GM12878 (cell line): ENCODE measurements at regions of chr2 and their contacts with region 1.

Region 1: DNA sequence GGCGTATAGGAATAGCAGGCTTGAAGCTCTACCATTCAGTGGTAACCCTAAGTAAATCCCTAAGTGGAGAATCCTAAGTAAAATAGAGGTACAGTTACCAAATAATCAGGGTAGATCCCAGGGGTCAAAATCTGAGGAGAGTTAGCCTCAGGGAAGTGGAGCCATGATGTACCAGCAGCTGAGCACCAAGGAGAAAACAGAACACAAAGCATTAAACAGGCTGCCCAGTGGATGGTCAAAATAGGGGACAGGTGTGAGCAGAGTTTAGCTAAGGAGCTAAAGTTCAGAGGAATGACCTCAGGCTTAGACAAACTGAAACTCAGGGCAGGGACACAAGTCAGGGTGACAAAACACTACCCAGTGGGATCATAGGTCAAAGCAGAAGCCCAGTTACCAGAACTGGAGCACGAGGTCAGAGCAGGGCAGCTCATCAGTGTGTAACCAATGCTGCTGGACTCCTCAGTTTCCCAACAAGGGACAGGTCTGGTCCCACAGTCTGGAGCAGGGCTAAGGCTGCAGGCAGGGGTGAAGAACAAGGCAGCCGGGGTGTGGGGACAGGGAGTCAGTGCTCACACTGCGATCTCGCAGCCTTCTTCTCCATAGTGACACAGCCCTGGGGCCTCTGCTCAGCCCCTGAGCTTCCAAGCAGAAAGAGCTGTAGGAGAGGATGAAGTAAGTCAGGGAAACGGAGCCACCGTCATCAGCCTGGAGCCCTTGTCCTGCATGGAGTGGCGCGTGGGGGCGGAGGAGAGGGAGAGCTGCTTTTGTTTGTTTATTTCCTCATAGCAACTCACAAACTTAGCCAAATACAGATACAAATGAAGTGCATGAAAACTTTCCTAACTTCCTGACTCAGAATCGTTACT is 264.0 kb downstream of the MREG start:
- DNase-seq: no peak
- ATAC-seq: peak; percentile 83
- H3K4me3 ChIP-seq: no peak overlapping the region
- H3K27ac ChIP-seq: no peak overlapping the region
- H3K4me1 ChIP-seq: no peaks in the 10 kb centered on the region
- H3K27me3 ChIP-seq: no peaks in the 10 kb centered on the region; a peak in 1 of 4 replicates
- CTCF ChIP-seq: no peak
- EP300 ChIP-seq: no peak
- POLR2A ChIP-seq: no peak
- RAD21 ChIP-seq: no peak

Region 2: DNA sequence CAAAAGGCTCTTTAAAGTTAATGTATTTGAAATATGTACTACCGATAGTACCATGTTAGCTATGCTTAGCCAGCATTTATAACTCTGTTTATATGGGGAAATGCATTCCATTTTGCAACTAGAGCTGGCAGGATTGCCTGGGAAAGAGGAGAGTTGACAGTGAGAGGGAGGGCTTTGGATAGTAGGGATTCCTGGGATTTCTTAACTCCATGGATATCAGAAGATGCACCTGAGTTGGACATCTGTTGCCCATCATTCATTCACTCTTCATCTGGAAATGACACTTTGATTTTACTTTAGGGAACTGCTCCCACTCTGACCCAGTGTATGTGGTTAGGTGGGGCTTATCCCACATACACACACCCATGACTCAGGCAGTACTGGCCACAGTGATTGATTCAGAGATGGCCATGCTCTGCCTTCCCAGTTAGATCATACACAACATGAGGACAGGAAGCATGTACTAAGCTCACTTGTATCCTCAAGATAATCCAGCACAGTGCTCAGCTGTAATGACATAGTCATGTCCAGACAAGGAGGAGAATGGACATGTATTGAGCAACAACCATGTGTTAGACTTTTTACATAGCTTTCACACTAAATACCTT is 15.2 kb after region 1 on chr2:
- CTCF ChIA-PET with region 1: interaction called, 6 read pairs
- POLR2A ChIA-PET with region 1: interaction called, 3 read pairs
- RAD21 ChIA-PET with region 1: no interaction called
- SMC1A ChIA-PET with region 1: interaction called, 18 read pairs
- in situ Hi-C with region 1: no loop called
- intact Hi-C with region 1: no loop called
- DNase-seq: no peak
- ATAC-seq: peak; percentile 41
- H3K4me3 ChIP-seq: no peak overlapping the region
- H3K27ac ChIP-seq: no peak overlapping the region
- H3K4me1 ChIP-seq: no peaks in the 10 kb centered on the region
- H3K27me3 ChIP-seq: 0 out of 4 replicates have a peak, but pooled peaks cover 0 to 2% of the 10 kb centered on the region in 2 experiments
- CTCF ChIP-seq: no peak
- EP300 ChIP-seq: no peak
- POLR2A ChIP-seq: no peak
- RAD21 ChIP-seq: no peak

Region 3: DNA sequence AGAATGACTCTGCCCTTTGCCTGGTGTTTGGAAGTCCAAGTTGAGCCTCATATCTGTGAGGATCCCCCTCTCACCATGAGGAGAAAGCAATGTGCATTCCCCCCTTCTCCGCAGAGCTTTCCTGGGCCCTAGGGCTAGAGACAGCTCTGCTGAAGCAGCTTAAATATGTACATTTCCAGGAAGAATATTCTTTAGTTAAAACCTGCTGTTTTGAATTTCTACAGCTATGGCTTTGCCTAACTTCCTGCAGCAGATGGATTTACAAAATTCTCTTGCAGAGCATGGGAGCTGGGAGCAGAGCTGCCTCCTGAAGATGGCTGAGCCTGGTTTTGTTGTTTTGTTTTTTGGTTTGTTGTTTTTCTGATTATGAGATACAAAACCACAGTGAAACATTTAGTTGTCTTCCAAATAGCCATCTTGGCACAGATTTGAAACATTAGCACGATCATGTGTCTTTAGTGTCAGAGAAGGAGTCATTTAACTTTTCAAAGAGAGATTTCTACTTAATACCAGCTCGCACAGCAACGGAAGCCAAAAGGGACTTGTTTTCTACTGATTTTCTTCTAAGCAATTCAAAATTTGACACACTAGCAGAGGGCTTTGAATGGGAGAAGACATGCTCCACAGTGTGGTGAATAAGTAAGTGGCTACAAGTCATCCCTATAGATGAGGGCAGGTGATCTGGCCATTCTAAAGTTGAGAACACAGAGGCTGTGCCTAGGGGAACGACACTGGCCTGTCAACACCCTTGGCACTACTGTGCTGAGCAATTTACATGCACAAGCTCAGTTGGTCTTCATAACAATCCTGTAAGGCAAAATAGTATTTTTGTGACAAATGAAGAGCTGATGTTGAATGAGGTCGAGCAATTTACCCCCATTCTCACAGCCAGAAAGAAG is 41.4 kb after region 1 on chr2:
- CTCF ChIA-PET with region 1: no interaction called
- POLR2A ChIA-PET with region 1: no interaction called
- RAD21 ChIA-PET with region 1: no interaction called
- SMC1A ChIA-PET with region 1: no interaction called
- in situ Hi-C with region 1: no loop called
- intact Hi-C with region 1: no loop called
- DNase-seq: no peak
- ATAC-seq: no peak
- H3K4me3 ChIP-seq: no peak overlapping the region
- H3K27ac ChIP-seq: no peak overlapping the region
- H3K4me1 ChIP-seq: peaks cover 5% of the 10 kb centered on the region; the same call in 1 of the 2 replicates
- H3K27me3 ChIP-seq: no peaks in the 10 kb centered on the region
- CTCF ChIP-seq: no peak
- EP300 ChIP-seq: no peak
- POLR2A ChIP-seq: no peak
- RAD21 ChIP-seq: no peak